Body of pancreas (tissue), 4 donors: ENCODE measurements at regions of chr1 and their contacts with region 1.

Region 1: GRCh38 chr1:52919051-52919722 is 2.4 kb downstream of the ECHDC2 start:
- DNase-seq: no peak
- ATAC-seq: no peak
- H3K4me3 ChIP-seq: no peak overlapping the region
- H3K27ac ChIP-seq: peak overlapping the region in 1 of 4 donors; percentile 17
- H3K4me1 ChIP-seq: peaks cover 30% of the 10 kb centered on the region
- H3K27me3 ChIP-seq: no peaks in the 10 kb centered on the region
- CTCF ChIP-seq: no peak
- POLR2A ChIP-seq: no peak

Region 2: DNA sequence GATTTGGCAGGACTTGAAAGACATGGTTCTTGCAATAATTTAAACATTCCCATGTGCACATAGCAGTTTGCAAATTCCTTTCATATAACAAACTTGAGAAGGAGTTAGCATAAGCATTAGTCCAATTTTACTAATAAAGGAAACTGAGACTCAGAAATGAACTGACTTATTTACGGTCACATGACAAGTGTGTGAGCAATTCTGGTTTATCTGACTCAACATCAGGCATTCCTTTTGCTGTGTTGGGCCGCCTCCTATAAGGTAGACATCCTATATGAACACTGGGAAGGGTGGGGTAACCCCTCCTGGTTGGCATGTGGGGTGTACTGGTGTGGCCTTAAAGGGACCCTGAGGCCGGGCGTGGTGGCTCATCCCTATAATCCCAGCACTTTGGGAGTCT is 268.9 kb after region 1 on chr1:
- intact Hi-C with region 1: loop called (anchors 5 kb)
- DNase-seq: no peak
- ATAC-seq: no peak
- H3K4me3 ChIP-seq: no peak overlapping the region
- H3K27ac ChIP-seq: no peak overlapping the region
- H3K4me1 ChIP-seq: peaks cover 8% of the 10 kb centered on the region
- H3K27me3 ChIP-seq: no peaks in the 10 kb centered on the region
- CTCF ChIP-seq: no peak
- POLR2A ChIP-seq: no peak